ENCODE measurements at regions of chr2 and their contacts with region 1.

Region 1: DNA sequence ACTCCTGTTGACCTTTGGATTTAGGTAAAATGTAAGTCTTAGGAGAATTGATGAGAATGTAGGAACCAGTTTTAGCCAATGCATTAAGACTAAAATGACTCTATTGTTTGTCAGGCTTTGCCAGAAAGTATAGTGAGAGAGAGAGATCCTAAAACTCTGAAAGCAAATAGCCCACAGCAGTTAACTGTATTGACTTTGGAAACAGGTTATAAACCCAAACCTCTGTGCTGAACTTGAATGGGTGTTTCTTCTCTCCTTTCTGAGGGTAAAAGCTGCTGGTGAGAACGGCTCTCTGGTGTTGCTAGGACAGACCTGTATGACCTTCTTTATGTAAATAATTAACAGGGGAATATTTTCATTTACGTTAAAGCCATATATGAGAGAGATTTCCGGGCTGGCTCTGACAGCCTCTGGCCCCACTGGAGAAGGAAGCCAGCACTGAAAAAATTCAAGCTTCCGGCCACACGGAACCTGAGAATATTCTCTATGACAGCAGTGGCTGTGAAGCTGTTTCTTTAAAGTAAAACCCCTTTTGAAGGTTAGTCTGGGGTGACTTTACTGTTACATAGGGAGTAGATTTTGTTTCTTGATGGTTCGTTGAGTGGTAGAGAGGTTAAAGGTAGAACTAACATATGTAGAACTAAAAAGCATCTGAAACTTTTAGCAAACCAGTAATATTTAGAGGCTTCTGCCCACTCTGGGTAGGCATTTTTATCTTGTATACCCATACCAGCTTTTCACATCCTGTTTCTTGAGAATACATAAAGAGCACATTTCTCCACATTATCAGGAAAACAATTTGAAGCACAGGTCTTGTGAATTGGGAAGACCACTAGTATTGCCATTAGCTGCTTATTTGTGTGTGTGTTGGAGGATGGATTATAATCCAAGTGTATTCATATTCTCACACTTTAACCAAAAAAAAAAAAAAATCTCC is 123.8 kb downstream of the SPTBN1 start:
- DNase-seq: peak; percentile 89
- ATAC-seq: peak; percentile 82
- H3K4me3 ChIP-seq: peak overlapping the region; percentile 45
- H3K27ac ChIP-seq: peak overlapping the region; percentile 95
- H3K4me1 ChIP-seq: peaks cover 81% of the 10 kb centered on the region
- H3K27me3 ChIP-seq: no peaks in the 10 kb centered on the region
- CTCF ChIP-seq: no peak
- EP300 ChIP-seq: 0 out of 4 replicates have a peak, but pooled peaks have one; percentile 39 to 69
- POLR2A ChIP-seq: no peak
- RAD21 ChIP-seq: peak; percentile 13; the same call in 1 of the 2 replicates

Region 2: GRCh38 chr2:53896864-53897263 is 683.1 kb before region 1 on chr2:
- CTCF ChIA-PET with region 1: no interaction called
- POLR2A ChIA-PET with region 1: no interaction called
- RAD21 ChIA-PET with region 1: no interaction called
- SMC1A ChIA-PET with region 1: no interaction called
- in situ Hi-C with region 1: no loop called
- intact Hi-C with region 1: no loop called
- DNase-seq: no peak
- ATAC-seq: no peak
- H3K4me3 ChIP-seq: no peak overlapping the region
- H3K27ac ChIP-seq: no peak overlapping the region
- H3K4me1 ChIP-seq: no peaks in the 10 kb centered on the region
- H3K27me3 ChIP-seq: no peaks in the 10 kb centered on the region
- CTCF ChIP-seq: no peak
- EP300 ChIP-seq: no peak
- POLR2A ChIP-seq: no peak
- RAD21 ChIP-seq: no peak

Region 3: DNA sequence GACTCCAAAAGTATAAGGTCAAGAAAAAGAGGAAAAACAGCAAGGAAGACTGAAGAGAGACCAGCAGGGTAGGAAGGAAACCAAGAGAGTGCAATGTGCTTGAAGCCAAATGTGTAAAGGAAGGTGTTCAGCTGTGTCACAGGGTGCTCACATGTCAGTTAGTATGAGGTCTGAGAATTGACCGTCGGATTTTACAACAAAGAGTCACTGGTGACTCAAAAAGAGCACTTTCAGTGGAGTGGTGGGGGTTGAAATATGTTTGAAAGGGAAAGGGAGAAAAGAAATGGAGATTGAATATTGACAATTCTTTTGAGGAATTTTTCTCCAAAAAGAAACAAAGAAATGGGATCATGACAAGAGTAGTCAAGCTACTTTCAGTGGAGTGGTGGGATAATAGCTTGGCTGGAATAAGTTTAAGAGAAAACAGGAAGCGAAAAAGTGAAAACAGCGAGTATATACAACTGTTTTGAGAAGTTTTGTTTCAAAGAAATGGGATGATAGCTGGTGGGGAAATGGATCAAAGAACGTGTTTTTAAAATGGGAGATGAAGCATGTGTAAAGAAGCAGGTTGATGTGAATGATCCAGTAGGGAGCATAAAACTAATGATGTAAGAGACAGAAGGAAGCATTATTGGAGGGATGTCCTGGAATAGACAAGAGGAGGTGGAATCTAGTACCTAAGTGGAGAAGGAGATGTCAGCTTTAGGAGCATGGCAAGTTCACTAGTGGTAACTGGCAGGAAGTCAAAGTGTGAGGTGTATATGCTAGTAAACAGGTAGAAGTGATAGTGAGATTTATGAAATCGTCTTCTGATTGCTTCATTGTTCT is 320.3 kb before region 1 on chr2:
- CTCF ChIA-PET with region 1: no interaction called
- POLR2A ChIA-PET with region 1: no interaction called
- RAD21 ChIA-PET with region 1: no interaction called
- SMC1A ChIA-PET with region 1: no interaction called
- in situ Hi-C with region 1: no loop called
- intact Hi-C with region 1: no loop called
- DNase-seq: no peak
- ATAC-seq: peak; percentile 96
- H3K4me3 ChIP-seq: no peak overlapping the region
- H3K27ac ChIP-seq: no peak overlapping the region
- H3K4me1 ChIP-seq: peaks cover 6% of the 10 kb centered on the region
- H3K27me3 ChIP-seq: no peaks in the 10 kb centered on the region
- CTCF ChIP-seq: no peak
- EP300 ChIP-seq: 0 out of 4 replicates have a peak, but pooled peaks of 1 of the 2 experiments have one; percentile 20
- POLR2A ChIP-seq: no peak
- RAD21 ChIP-seq: no peak

Region 4: GRCh38 chr2:54558188-54559005 is 21.6 kb before region 1 on chr2:
- CTCF ChIA-PET with region 1: interaction called, 79 read pairs
- POLR2A ChIA-PET with region 1: interaction called, 504 read pairs
- RAD21 ChIA-PET with region 1: interaction called, 195 read pairs
- SMC1A ChIA-PET with region 1: interaction called, 569 read pairs
- in situ Hi-C with region 1: no loop called
- intact Hi-C with region 1: no loop called
- DNase-seq: no peak
- ATAC-seq: peak; percentile 63
- H3K4me3 ChIP-seq: peak overlapping the region; percentile 99
- H3K27ac ChIP-seq: peak overlapping the region; percentile 96
- H3K4me1 ChIP-seq: peaks cover 18% of the 10 kb centered on the region
- H3K27me3 ChIP-seq: no peaks in the 10 kb centered on the region
- CTCF ChIP-seq: no peak
- EP300 ChIP-seq: no peak
- POLR2A ChIP-seq: peak; percentile 78
- RAD21 ChIP-seq: no peak

Region 5: DNA sequence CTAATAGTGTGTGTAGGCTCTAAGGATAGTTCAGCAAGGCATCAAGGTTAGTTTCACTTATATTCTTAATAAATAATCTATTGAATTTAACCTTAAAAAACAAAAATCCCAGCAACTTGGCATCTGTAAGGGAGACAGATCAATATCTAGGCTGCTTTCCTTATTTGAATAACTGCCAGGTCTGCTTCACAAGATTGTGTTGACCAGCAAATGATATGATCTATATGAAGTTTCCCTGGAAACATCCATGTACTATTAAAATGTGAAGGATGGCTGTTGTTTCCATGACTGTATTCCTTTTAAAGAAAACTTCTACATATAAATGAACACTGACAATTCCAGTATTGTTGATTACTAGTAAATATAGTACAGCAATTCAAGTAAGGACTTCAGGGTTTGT is 14.4 kb before region 1 on chr2:
- CTCF ChIA-PET with region 1: interaction called, 79 read pairs
- POLR2A ChIA-PET with region 1: interaction called, 504 read pairs
- RAD21 ChIA-PET with region 1: interaction called, 195 read pairs
- SMC1A ChIA-PET with region 1: interaction called, 569 read pairs
- in situ Hi-C with region 1: no loop called
- intact Hi-C with region 1: no loop called
- DNase-seq: no peak
- ATAC-seq: no peak
- H3K4me3 ChIP-seq: 0 out of 2 replicates have a peak overlapping the region, but pooled peaks have one; percentile 43
- H3K27ac ChIP-seq: peak overlapping the region; percentile 62; the same call in 1 of the 2 replicates
- H3K4me1 ChIP-seq: peaks cover 41% of the 10 kb centered on the region
- H3K27me3 ChIP-seq: no peaks in the 10 kb centered on the region
- CTCF ChIP-seq: no peak
- EP300 ChIP-seq: no peak
- POLR2A ChIP-seq: no peak
- RAD21 ChIP-seq: no peak

Region 6: DNA sequence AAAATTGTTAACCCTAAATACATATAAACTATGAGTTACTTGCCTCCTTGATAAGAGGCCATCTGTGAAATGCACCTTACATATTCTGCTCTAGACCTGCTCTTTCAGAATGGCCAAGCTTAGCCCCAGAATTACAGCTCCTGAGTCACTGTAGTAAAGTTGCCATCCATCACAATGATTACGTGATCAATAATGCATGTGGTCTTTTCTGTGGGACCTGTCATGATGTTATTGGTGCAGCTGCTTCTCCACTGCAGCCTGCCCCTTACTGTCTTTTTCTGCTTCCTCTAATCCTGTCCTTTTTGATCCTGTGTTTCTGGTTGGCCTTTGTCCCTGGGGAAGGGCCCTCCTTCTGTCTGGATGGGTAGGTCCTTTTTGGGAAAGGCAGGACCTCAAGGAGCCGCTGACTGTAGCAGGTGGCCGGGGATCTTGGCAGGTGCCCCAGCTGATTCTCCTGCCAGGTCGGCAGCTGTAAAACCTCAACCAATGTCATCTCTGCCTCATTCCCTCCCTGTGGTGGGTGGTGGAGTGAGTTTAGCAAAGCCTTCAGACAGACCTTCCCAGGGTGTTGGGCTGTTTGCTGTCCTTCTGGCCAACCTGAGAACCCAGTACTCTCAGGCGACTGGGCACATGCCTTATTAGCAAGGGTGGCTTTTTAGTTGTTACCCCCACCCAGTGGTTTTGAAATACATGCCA is 17.3 kb after region 1 on chr2:
- CTCF ChIA-PET with region 1: interaction called, 4 read pairs
- POLR2A ChIA-PET with region 1: interaction called, 24 read pairs
- RAD21 ChIA-PET with region 1: interaction called, 14 read pairs
- SMC1A ChIA-PET with region 1: interaction called, 37 read pairs
- in situ Hi-C with region 1: no loop called
- intact Hi-C with region 1: no loop called
- DNase-seq: no peak
- ATAC-seq: peak; percentile 65
- H3K4me3 ChIP-seq: no peak overlapping the region
- H3K27ac ChIP-seq: peak overlapping the region; percentile 84
- H3K4me1 ChIP-seq: peaks cover 49% of the 10 kb centered on the region
- H3K27me3 ChIP-seq: no peaks in the 10 kb centered on the region
- CTCF ChIP-seq: no peak
- EP300 ChIP-seq: no peak
- POLR2A ChIP-seq: peak; percentile 21; the same call in 1 of the 2 replicates
- RAD21 ChIP-seq: peak; percentile 23; the same call in 1 of the 2 replicates

Region 7: GRCh38 chr2:54606393-54606969 is 26.5 kb after region 1 on chr2:
- CTCF ChIA-PET with region 1: interaction called, 3 read pairs
- POLR2A ChIA-PET with region 1: interaction called, 15 read pairs
- RAD21 ChIA-PET with region 1: interaction called, 8 read pairs
- SMC1A ChIA-PET with region 1: interaction called, 14 read pairs
- in situ Hi-C with region 1: no loop called
- intact Hi-C with region 1: no loop called
- DNase-seq: no peak
- ATAC-seq: no peak
- H3K4me3 ChIP-seq: no peak overlapping the region
- H3K27ac ChIP-seq: no peak overlapping the region
- H3K4me1 ChIP-seq: peaks cover 24% of the 10 kb centered on the region
- H3K27me3 ChIP-seq: no peaks in the 10 kb centered on the region
- CTCF ChIP-seq: no peak
- EP300 ChIP-seq: no peak
- POLR2A ChIP-seq: no peak
- RAD21 ChIP-seq: no peak

Region 8: GRCh38 chr2:54673501-54673998 is 93.6 kb after region 1 on chr2:
- CTCF ChIA-PET with region 1: interaction called, 3 read pairs
- POLR2A ChIA-PET with region 1: interaction called, 6 read pairs
- RAD21 ChIA-PET with region 1: interaction called, 22 read pairs
- SMC1A ChIA-PET with region 1: interaction called, 8 read pairs
- in situ Hi-C with region 1: no loop called
- intact Hi-C with region 1: no loop called
- DNase-seq: no peak
- ATAC-seq: peak; percentile 76
- H3K4me3 ChIP-seq: no peak overlapping the region
- H3K27ac ChIP-seq: peak overlapping the region; percentile 70
- H3K4me1 ChIP-seq: peaks cover 20% of the 10 kb centered on the region
- H3K27me3 ChIP-seq: no peaks in the 10 kb centered on the region
- CTCF ChIP-seq: no peak
- EP300 ChIP-seq: no peak
- POLR2A ChIP-seq: no peak
- RAD21 ChIP-seq: no peak

Region 9: DNA sequence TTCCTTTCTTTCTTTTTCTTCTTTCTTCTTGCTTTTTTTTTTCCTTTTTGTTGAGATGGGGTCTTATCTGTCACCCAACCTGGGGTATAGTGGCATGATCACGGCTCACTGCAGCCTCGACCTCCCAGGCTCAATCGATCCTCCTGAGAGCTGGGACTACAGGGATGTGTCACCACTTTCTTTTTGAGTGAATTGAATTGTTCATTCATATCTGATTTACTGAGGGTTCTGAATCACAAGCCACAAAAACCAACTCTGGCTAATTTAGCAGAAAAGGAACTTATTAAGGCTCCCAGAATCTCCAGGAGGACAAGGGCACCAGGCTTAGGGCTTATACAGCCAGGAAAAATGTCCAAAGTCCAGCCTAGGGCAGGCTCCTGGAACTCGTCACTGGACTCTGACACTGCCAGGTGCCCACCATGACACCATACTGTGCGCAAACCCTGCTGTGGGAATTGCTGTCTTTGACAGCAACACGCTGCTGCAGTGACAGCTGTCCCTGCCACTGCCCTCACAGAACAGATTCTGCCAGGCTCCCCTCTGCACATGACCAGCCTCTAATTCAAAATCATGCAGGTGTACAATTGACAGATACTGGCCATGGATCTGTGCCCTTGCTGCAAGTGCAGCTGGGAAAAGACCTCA is 100.6 kb after region 1 on chr2:
- CTCF ChIA-PET with region 1: no interaction called
- POLR2A ChIA-PET with region 1: interaction called, 6 read pairs
- RAD21 ChIA-PET with region 1: interaction called, 22 read pairs
- SMC1A ChIA-PET with region 1: interaction called, 6 read pairs
- in situ Hi-C with region 1: no loop called
- intact Hi-C with region 1: no loop called
- DNase-seq: peak; percentile 77
- ATAC-seq: peak; percentile 81
- H3K4me3 ChIP-seq: peak overlapping the region; percentile 34; the same call in 1 of the 2 replicates
- H3K27ac ChIP-seq: peak overlapping the region; percentile 47
- H3K4me1 ChIP-seq: peaks cover 31% of the 10 kb centered on the region
- H3K27me3 ChIP-seq: no peaks in the 10 kb centered on the region; a peak in 1 of 4 replicates
- CTCF ChIP-seq: no peak
- EP300 ChIP-seq: peak; percentile 48 to 84; a peak in 3 of 4 replicates
- POLR2A ChIP-seq: no peak
- RAD21 ChIP-seq: no peak

Measured in GM12878 (cell line).